Transverse colon (tissue), 4 donors: ENCODE measurements at regions of chr16 and their contacts with region 1.

Region 1: GRCh38 chr16:2874912-2875362 is 8.1 kb upstream of the FLYWCH2 start:
- DNase-seq: peak; percentile 83
- H3K4me3 ChIP-seq: no peak overlapping the region
- H3K27ac ChIP-seq: peak overlapping the region in 1 of 4 donors; percentile 21
- H3K4me1 ChIP-seq: peaks cover 3 to 7% (median 6%) of the 10 kb centered on the region in 4 donors
- H3K27me3 ChIP-seq: no peaks in the 10 kb centered on the region
- CTCF ChIP-seq: peak; percentile 92 to 99 (median 94)
- EP300 ChIP-seq: no peak
- POLR2A ChIP-seq: no peak

Region 2: DNA sequence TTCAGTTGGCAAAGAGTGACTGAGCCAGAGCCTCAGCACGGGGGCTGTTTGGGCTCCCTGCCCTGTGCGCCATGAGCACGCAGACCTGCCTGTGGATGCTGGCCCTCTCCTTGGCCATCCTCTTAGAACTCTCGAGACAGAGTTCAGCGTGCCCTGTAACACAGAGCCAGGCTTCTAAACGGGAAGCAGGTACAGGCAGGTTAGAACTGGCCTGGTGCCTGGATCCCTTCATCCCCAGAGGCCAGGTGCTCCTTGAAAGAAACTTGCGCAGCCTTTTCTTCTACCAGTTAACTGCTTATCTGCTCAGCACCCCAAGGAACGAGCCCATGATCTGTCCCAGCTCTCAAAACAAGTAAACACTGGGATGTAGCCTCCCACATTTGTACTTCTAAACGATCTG is 438.8 kb before region 1 on chr16:
- in situ Hi-C with region 1: no loop called
- intact Hi-C with region 1: no loop called
- DNase-seq: no peak
- H3K4me3 ChIP-seq: no peak overlapping the region
- H3K27ac ChIP-seq: no peak overlapping the region
- H3K4me1 ChIP-seq: no peaks in the 10 kb centered on the region
- H3K27me3 ChIP-seq: no peaks in the 10 kb centered on the region
- CTCF ChIP-seq: no peak
- EP300 ChIP-seq: no peak
- POLR2A ChIP-seq: no peak

Region 3: DNA sequence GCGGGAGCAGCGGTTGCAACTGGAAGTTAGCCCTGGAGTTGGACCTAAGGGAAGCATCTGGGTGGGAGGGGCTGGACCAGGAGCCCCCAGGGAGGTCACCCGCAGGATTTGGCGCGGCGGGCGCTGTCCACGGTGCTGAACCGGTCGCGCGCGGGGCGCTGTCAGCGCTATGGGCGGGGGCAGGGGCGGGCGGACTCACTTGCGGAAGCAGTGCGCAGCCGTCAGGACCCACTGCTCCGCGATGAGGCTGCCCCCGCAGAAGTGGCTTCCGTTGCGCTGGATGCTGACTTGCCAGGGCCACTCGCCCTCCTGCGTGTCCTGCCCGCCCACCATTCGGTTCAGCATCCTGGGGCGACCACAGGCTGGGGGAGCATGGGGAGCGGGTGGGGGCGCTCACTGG is 159.4 kb before region 1 on chr16:
- in situ Hi-C with region 1: no loop called
- intact Hi-C with region 1: no loop called
- DNase-seq: peak; percentile 60
- H3K4me3 ChIP-seq: no peak overlapping the region
- H3K27ac ChIP-seq: no peak overlapping the region
- H3K4me1 ChIP-seq: peaks cover 4 to 27% (median 15%) of the 10 kb centered on the region in 4 donors
- H3K27me3 ChIP-seq: peaks cover 19% of the 10 kb centered on the region
- CTCF ChIP-seq: no peak
- EP300 ChIP-seq: no peak
- POLR2A ChIP-seq: no peak

Region 4: GRCh38 chr16:2919511-2920255 is 44.7 kb after region 1 on chr16:
- in situ Hi-C with region 1: loop called in 2 of 4 experiments (anchors 5 to 10 kb)
- intact Hi-C with region 1: loop called (anchors 5 kb)
- DNase-seq: peak; percentile 61
- H3K4me3 ChIP-seq: no peak overlapping the region
- H3K27ac ChIP-seq: peak overlapping the region; percentile 34 to 68 (median 62)
- H3K4me1 ChIP-seq: peaks cover 0 to 7% (median 0%) of the 10 kb centered on the region in 4 donors
- H3K27me3 ChIP-seq: no peaks in the 10 kb centered on the region
- CTCF ChIP-seq: peak; percentile 91 to 98 (median 93)
- EP300 ChIP-seq: no peak
- POLR2A ChIP-seq: no peak

Region 5: DNA sequence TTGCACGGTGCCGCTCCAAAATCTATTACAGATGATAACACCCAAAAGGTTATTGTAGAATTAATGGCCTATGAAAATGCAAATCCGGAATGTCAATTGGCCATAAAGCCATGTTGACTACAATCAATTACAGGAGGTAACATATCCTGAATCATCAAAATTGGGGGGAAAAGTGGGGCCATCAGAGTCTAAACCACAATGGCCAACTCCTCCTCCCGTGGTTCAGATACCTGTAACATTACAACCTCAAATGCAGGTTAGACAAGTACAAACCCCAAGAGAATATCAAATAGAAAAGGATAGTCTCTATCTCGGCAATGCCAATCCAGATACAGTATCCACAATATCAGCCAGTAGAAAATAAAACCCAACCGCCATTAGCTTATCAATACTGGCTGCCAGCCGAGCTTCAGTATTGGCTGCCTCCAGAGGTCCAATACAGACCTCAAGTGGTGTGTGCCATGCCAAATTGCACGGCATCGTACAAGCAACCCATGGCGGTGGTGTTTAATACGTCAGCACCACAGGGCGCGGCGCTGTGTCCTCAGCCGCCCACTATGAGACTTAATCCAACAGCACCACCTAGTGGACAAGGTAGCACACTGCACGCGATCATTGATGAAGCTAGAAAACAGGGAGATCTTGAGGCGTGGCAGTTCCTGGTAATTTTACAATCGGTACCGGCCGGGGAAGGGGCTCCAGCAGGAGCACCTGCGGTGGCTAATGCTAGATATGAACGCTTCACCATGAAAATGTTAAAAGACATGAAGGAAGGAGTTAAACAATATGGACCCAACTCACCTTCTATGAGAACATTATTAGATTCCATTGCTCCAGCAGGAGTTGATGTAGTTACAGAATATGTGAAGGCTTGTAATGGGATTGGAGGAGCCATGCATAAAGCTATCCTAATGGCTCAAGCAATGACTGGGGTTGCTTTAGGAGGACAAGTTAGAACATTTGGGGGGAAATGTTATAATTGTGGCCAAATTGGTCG is 52.0 kb after region 1 on chr16:
- in situ Hi-C with region 1: loop called in 1 of 4 experiments (anchors 10 kb)
- intact Hi-C with region 1: loop called (anchors 5 kb)
- DNase-seq: peak; percentile 92
- H3K4me3 ChIP-seq: no peak overlapping the region
- H3K27ac ChIP-seq: no peak overlapping the region
- H3K4me1 ChIP-seq: peaks cover 0 to 8% (median 2%) of the 10 kb centered on the region in 4 donors
- H3K27me3 ChIP-seq: no peaks in the 10 kb centered on the region
- CTCF ChIP-seq: peak; percentile 96 to 98 (median 97)
- EP300 ChIP-seq: no peak
- POLR2A ChIP-seq: no peak

Region 6: DNA sequence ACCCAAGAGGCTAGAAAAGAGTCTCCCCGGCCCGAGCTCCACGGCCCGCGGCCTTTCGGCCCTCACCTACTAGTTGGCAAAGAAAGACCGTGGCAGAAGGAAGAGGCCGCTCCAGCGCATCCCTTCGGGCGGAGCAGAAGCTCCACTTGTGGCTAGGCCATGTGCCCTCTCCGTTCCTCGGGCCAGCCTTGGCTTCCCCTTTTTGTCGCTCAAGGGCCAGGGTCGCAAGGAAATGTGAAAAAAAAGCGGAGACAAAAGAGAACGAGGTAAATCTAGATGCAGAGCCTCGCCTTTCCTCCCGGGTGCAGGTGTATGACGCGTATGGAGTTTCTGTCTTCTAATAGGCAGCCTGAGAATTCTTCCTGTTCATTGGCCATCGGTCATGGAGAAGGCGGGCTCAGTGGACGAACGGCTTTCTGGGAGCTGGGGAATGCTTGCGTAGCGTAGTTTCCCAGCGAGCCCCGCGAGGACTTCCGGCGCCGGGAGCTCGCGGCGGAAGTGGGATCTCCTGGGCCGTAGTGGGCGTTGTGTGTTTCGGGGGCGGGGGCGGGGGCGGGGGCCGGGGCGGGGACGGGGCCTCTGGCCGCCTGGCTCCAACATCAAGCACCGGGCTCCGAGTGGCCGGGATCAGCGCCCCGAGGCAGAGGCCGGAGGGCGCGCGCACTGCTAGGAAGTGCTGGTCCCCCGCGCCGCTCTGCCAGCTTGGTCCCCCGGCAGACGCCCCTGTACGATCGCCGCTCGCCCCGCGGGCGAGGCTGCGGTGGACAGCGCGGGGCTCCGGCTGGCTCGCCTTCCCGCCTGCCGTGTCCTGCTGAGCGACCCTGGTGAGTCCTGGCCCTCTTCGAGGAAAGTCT is 259.9 kb after region 1 on chr16 and contains the start of gene ZNF213:
- in situ Hi-C with region 1: no loop called
- intact Hi-C with region 1: no loop called
- DNase-seq: peak; percentile 97
- H3K4me3 ChIP-seq: peak within 1 kb of the TSS; percentile 76 to 99 (median 92)
- H3K27ac ChIP-seq: peak within 1 kb of the TSS; percentile 96 to 99 (median 99)
- H3K4me1 ChIP-seq: peaks cover 10 to 36% (median 21%) of the 10 kb centered on the region in 4 donors
- H3K27me3 ChIP-seq: no peaks in the 10 kb centered on the region
- CTCF ChIP-seq: peak in 1 of 5 experiments; percentile 12
- EP300 ChIP-seq: no peak
- POLR2A ChIP-seq: peak; percentile 95
- total RNA-seq, gene ZNF213: 12.1 to 64.3 (median 16.1) TPM